ENCODE measurements at regions of chr4 and their contacts with region 1.

Region 1: GRCh38 chr4:105146276-105147015 is at the start of gene TET2:
- DNase-seq: peak; percentile 94
- H3K4me3 Mint-ChIP-seq: peak within 1 kb of the TSS; percentile 99
- H3K27ac Mint-ChIP-seq: peak within 1 kb of the TSS; percentile 99
- H3K4me1 Mint-ChIP-seq: peaks cover 25% of the 10 kb centered on the region
- H3K27me3 Mint-ChIP-seq: no peaks in the 10 kb centered on the region
- total RNA-seq, gene TET2: 26.1 and 28.9 TPM in 2 replicates

Region 2: GRCh38 chr4:104966349-104967033 is 180.0 kb before region 1 on chr4:
- intact Hi-C with region 1: loop called (anchors 2 kb)
- DNase-seq: peak; percentile 82
- H3K4me3 Mint-ChIP-seq: peak overlapping the region; percentile 71
- H3K27ac Mint-ChIP-seq: peak overlapping the region; percentile 87
- H3K4me1 Mint-ChIP-seq: peaks cover 10% of the 10 kb centered on the region
- H3K27me3 Mint-ChIP-seq: peaks cover 3% of the 10 kb centered on the region

Region 3: GRCh38 chr4:105191621-105192210 is 45.3 kb after region 1 on chr4:
- intact Hi-C with region 1: loop called (anchors 1 kb)
- DNase-seq: no peak
- H3K4me3 Mint-ChIP-seq: peak overlapping the region; percentile 8
- H3K27ac Mint-ChIP-seq: peak overlapping the region; percentile 79
- H3K4me1 Mint-ChIP-seq: peaks cover 45% of the 10 kb centered on the region
- H3K27me3 Mint-ChIP-seq: no peaks in the 10 kb centered on the region

Region 4: GRCh38 chr4:105306158-105306781 is 159.8 kb after region 1 on chr4:
- intact Hi-C with region 1: loop called (anchors 1 kb)
- DNase-seq: peak; percentile 83
- H3K4me3 Mint-ChIP-seq: peak overlapping the region; percentile 61
- H3K27ac Mint-ChIP-seq: peak overlapping the region; percentile 94
- H3K4me1 Mint-ChIP-seq: peaks cover 22% of the 10 kb centered on the region
- H3K27me3 Mint-ChIP-seq: no peaks in the 10 kb centered on the region

Region 5: GRCh38 chr4:105483840-105484239 is 337.4 kb after region 1 on chr4:
- intact Hi-C with region 1: no loop called
- DNase-seq: no peak
- H3K4me3 Mint-ChIP-seq: no peak overlapping the region
- H3K27ac Mint-ChIP-seq: no peak overlapping the region
- H3K4me1 Mint-ChIP-seq: no peaks in the 10 kb centered on the region
- H3K27me3 Mint-ChIP-seq: peaks cover 7% of the 10 kb centered on the region

Region 6: GRCh38 chr4:105708530-105709391 is 562.3 kb after region 1 on chr4 and contains the starts of genes GSTCD and INTS12:
- intact Hi-C with region 1: loop called (anchors 1 kb)
- DNase-seq: peak; percentile 96
- H3K4me3 Mint-ChIP-seq: peak within 1 kb of the TSS; percentile 99
- H3K27ac Mint-ChIP-seq: peak within 1 kb of the TSS; percentile 94
- H3K4me1 Mint-ChIP-seq: peaks cover 15% of the 10 kb centered on the region
- H3K27me3 Mint-ChIP-seq: no peaks in the 10 kb centered on the region
- total RNA-seq, gene GSTCD: 17.5 and 22.0 TPM in 2 replicates
- total RNA-seq, gene INTS12: 23.6 and 24.4 TPM in 2 replicates

Measured in activated CD4-positive, alpha-beta T cell treated with anti-CD3 and anti-CD28 coated beads, Interleukin-2, amount 10 ng/mL, durations not matched to agents 24 days and 14 days (primary cell).